Ascending aorta (tissue), 2 donors: ENCODE measurements at regions of chr11 and their contacts with region 1.

Region 1: GRCh38 chr11:114180301-114181055 is 115.7 kb upstream of the NNMT start:
- DNase-seq: no peak
- H3K4me3 ChIP-seq: peak overlapping the region; percentile 44 to 50
- H3K27ac ChIP-seq: peak overlapping the region; percentile 86 to 99
- H3K4me1 ChIP-seq: peaks cover 52 to 88% of the 10 kb centered on the region in 2 donors
- H3K27me3 ChIP-seq: no peaks in the 10 kb centered on the region
- CTCF ChIP-seq: peak; percentile 50 to 66 (median 54)

Region 2: DNA sequence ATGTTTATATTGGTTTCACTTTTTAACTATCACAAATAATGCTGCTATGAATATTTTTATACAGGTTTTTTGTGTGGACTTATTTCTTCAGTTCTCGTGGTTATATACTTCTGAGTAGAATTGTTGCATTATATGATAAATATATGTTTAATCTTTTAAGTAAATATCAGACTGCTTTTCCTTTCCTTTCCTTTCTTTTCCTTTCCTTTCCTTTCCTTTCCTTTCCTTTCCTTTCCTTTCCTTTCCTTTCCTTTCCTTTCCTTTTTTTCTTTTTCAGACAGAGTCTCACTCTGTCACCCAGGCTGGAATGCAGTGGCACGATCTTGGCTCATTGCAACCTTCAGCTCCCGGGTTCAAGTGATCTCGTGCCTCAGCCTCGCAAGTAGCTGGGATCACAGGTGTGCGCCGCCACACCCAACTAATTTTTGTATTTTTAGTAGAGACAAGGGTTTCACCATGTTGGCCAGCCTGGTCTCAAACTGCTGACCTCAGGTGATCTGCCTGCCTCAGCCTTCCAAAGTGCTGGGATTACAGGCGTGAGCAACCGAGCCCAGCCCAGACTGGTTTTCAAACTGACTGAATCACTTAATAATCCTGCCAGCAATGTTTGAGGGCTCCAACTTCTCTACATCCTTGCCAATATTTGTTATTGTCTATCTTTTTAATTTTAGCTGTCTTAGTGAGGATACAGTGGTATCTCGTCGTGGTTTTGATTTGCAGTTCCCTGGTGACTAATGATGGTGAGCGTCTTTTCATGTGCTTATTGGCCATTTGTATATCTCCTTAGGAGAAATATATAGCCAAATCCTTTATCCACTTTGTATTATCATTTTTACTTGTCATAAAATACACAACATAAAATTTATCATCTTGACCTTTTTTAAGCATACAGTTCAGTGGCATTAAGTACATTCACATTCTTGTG is 253.9 kb before region 1 on chr11:
- intact Hi-C with region 1: no loop called
- DNase-seq: no peak
- H3K4me3 ChIP-seq: no peak overlapping the region
- H3K27ac ChIP-seq: no peak overlapping the region
- H3K4me1 ChIP-seq: no peaks in the 10 kb centered on the region
- H3K27me3 ChIP-seq: no peaks in the 10 kb centered on the region
- CTCF ChIP-seq: no peak

Region 3: DNA sequence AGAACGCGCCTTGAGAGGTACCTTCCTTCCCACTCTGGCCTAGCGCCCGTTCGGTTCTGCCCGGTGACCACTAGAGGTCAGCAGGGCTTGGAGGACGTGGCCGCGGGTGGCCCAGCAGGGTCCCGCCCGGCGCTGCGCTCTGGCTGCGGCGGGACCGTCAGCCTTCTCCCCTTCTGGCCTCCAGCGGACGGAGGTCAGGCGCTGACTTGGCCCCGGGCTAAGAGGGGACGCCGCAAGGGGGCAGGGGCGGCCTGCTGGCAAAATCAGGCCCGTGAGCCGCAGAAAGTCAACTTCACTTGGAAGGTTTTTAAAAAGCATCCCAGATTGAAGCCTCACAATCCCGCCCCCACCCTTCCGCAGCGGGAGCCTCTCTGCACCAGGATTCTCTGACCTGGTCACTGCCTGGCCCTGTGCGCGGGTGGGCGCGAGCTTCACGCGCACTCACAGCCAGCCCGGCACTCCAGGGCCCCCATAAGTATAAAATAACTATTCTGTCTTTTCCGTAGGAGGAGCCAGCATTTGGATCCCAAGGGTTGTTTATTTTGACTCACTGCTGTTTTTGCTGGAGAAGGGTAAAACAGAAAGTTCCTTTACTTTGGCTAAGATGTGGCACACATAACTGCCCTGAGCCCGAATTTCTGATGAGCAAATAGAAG is 144.2 kb before region 1 on chr11:
- intact Hi-C with region 1: loop called (anchors 1 kb)
- DNase-seq: peak; percentile 27 to 88
- H3K4me3 ChIP-seq: peak overlapping the region; percentile 57 to 59
- H3K27ac ChIP-seq: peak overlapping the region; percentile 77 to 87
- H3K4me1 ChIP-seq: peaks cover 0 to 26% of the 10 kb centered on the region in 2 donors
- H3K27me3 ChIP-seq: no peaks in the 10 kb centered on the region
- CTCF ChIP-seq: peak; percentile 88 to 91 (median 90)

Region 4: DNA sequence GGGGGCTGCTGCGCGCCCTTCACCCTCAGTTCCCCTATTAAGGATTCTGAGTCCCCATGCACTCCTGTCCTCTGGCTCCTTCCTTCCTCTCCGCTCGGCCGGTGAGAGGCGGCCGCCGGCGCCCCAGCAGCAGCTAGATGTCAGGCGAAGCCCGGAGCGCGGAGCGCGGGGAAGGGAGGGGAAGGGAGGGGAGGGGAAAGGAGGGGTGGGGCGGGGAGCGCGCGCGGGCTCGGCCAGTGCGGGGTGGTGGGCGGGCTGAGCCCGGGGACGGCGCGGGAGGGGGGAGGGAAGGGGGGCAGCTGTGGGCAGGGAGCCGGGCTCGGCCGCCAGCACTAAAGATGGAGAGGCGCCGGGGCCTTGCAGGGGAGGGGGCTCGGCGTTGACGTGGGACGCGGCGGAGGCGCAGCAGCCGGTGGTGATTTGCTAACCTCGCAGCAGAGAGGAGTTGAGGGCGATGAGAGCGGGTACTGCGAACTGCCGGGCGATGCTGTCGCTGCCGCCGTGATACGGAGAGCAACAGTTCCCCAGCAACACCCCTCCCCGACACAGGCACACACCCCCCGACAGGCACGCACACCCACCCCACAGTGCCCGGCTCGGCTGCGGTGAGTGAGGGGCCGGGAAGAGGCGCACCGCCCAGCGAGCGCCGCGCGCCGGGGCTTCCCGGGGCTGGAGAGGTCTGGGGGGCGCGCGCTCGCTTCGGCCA is 121.0 kb before region 1 on chr11 and contains the start of gene ZBTB16:
- intact Hi-C with region 1: loop called (anchors 2 kb)
- DNase-seq: peak; percentile 54 to 94
- H3K4me3 ChIP-seq: peak within 1 kb of the TSS; percentile 87 to 99
- H3K27ac ChIP-seq: peak within 1 kb of the TSS; percentile 97 to 98
- H3K4me1 ChIP-seq: peaks cover 4 to 17% of the 10 kb centered on the region in 2 donors
- H3K27me3 ChIP-seq: no peaks in the 10 kb centered on the region
- CTCF ChIP-seq: peak; percentile 6 to 75 (median 40)
- total RNA-seq, gene ZBTB16: 344 TPM

Region 5: DNA sequence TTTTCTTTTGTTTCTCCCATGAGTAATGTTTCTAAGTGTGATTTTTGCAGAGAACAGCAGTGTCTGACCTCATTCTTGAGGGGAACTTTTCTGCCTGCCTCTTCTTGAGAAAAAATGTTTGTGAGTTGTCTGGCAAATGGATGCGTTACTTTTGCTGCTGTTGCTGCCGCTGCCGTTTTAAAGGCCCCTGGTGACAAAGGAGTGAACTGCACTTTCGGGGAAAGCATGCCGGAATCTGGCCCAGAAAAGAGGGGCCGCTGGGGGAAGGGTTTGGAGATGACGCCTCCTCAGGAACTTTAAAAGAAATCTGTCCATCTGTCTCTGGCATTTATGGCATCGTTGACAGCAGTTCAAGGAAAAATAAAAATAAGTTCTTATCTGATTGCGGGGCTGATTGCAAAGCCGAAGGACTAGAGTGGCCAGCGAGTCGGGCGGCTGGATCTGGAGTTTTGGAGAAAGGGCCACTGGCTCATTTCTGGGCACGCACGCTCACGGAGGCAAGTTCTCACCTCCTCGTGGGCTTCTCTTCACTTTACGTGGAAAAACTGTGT is 104.5 kb before region 1 on chr11:
- intact Hi-C with region 1: loop called (anchors 5 kb)
- DNase-seq: peak in 1 of 2 donors; percentile 82
- H3K4me3 ChIP-seq: peak overlapping the region; percentile 51 to 60
- H3K27ac ChIP-seq: peak overlapping the region; percentile 89 to 93
- H3K4me1 ChIP-seq: peaks cover 58 to 87% of the 10 kb centered on the region in 2 donors
- H3K27me3 ChIP-seq: no peaks in the 10 kb centered on the region
- CTCF ChIP-seq: peak; percentile 68 to 76 (median 74)

Region 6: DNA sequence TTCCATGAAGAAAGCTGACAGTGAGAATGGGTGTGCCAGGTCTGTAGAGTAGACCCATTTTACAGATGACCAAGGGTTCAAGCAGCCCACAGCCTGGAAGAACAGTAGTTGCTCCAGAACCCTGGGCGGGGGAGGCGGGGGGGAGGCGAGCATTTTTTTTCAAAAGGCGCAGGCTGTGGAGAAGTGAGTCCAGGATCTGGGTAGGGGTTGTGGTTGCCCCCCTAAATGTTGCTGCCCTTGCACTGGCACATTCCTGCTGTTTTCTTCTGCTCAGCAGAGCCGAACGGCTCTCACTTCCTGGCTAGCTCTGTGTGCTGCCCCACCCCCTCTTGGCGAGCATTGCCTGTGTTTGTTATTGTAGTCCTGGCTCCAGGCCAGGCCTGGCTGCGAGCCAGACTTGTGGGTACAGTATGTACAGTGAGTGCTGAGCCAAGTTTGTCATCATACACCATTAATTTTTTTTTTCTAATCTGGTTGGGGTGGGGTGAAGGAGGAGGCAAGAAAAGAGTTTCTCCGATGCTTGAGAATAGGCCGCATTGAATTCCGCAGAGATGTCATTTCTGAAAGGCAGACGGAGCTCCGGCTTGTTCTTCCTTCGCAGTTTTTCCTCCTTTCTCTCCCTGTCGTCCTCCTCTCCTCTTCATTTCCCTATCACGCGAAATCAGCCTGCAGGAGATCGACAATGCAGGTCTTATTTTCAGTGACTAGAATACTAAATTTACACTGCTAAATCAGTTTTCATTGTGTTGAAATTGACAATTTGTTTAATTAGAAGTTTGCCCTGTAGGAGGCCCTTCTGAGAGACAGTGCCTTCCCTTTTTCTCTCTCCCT is 20.5 kb before region 1 on chr11:
- intact Hi-C with region 1: loop called (anchors 1 kb)
- DNase-seq: peak; percentile 98 to 100
- H3K4me3 ChIP-seq: peak overlapping the region; percentile 44 to 48
- H3K27ac ChIP-seq: peak overlapping the region; percentile 92 to 99
- H3K4me1 ChIP-seq: peaks cover 58 to 93% of the 10 kb centered on the region in 2 donors
- H3K27me3 ChIP-seq: no peaks in the 10 kb centered on the region
- CTCF ChIP-seq: no peak

Region 7: GRCh38 chr11:114197799-114198500 is 17.5 kb after region 1 on chr11:
- intact Hi-C with region 1: loop called (anchors 2 kb)
- DNase-seq: peak; percentile 50 to 93
- H3K4me3 ChIP-seq: peak overlapping the region in 1 of 2 donors; percentile 31
- H3K27ac ChIP-seq: peak overlapping the region; percentile 88 to 98
- H3K4me1 ChIP-seq: peaks cover 45 to 83% of the 10 kb centered on the region in 2 donors
- H3K27me3 ChIP-seq: no peaks in the 10 kb centered on the region
- CTCF ChIP-seq: no peak

Region 8: GRCh38 chr11:114257621-114258558 is 77.4 kb after region 1 on chr11:
- intact Hi-C with region 1: loop called (anchors 5 kb)
- DNase-seq: peak in 1 of 2 donors; percentile 88
- H3K4me3 ChIP-seq: peak overlapping the region; percentile 18 to 30
- H3K27ac ChIP-seq: peak overlapping the region; percentile 77 to 88
- H3K4me1 ChIP-seq: peaks cover 24 to 54% of the 10 kb centered on the region in 2 donors
- H3K27me3 ChIP-seq: no peaks in the 10 kb centered on the region
- CTCF ChIP-seq: peak; percentile 28 to 55 (median 47)